MCF 10A (cell line): ENCODE measurements at regions of chr4 and their contacts with region 1.

Region 1: GRCh38 chr4:158193171-158193749 is 17.0 kb upstream of the TMEM144 start:
- DNase-seq: peak; percentile 60
- H3K4me3 Mint-ChIP-seq: no peak overlapping the region
- H3K27ac Mint-ChIP-seq: no peak overlapping the region
- H3K4me1 Mint-ChIP-seq: no peaks in the 10 kb centered on the region
- H3K27me3 Mint-ChIP-seq: no peaks in the 10 kb centered on the region
- CTCF ChIP-seq: peak; percentile 51

Region 2: DNA sequence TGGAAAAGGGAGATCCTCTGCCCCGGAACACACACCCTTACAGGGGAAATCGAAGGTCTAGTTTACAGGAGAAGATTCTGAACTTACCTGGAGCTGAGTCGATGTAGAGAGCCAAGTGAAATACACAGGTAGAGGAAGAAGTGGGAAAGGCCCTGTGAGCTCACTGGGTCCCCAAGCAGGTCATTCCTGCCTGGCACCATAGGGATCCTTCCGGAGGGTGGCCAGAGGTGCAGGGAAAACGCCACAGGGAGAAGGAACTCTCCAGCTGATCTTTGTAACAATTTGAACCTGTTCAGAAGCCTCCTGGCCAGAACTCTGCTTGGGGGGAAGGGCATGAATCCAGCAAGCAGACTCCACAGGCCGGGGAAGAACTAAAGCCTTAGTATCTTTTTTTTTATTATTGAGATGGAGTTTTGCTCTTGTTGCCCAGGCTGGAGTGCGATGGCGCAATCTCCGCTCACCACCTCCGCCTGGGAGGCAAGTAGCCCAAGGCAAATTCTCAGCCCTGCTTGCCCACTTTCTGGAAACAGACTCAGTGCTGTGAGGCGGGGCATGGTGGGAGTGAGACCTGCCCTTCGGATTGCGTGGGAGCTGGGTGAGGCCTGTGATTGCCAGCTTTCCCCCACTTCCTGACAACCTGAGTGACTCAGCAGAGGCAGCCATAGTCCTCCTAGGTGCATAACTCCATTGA is 369.4 kb before region 1 on chr4:
- CTCF ChIA-PET with region 1: no interaction called
- POLR2A ChIA-PET with region 1: no interaction called
- intact Hi-C with region 1: no loop called
- DNase-seq: peak; percentile 97
- H3K4me3 Mint-ChIP-seq: peak overlapping the region; percentile 35
- H3K27ac Mint-ChIP-seq: peak overlapping the region; percentile 89
- H3K4me1 Mint-ChIP-seq: peaks cover 22% of the 10 kb centered on the region
- H3K27me3 Mint-ChIP-seq: no peaks in the 10 kb centered on the region
- CTCF ChIP-seq: no peak

Region 3: GRCh38 chr4:158182736-158183135 is 10.5 kb before region 1 on chr4:
- CTCF ChIA-PET with region 1: interaction called, 28 read pairs
- POLR2A ChIA-PET with region 1: interaction called, 4 read pairs
- intact Hi-C with region 1: no loop called
- DNase-seq: no peak
- H3K4me3 Mint-ChIP-seq: no peak overlapping the region
- H3K27ac Mint-ChIP-seq: no peak overlapping the region
- H3K4me1 Mint-ChIP-seq: no peaks in the 10 kb centered on the region
- H3K27me3 Mint-ChIP-seq: no peaks in the 10 kb centered on the region
- CTCF ChIP-seq: no peak

Region 4: GRCh38 chr4:158238575-158238974 is 45.3 kb after region 1 on chr4:
- CTCF ChIA-PET with region 1: interaction called, 16 read pairs
- POLR2A ChIA-PET with region 1: no interaction called
- intact Hi-C with region 1: no loop called
- DNase-seq: no peak
- H3K4me3 Mint-ChIP-seq: no peak overlapping the region
- H3K27ac Mint-ChIP-seq: no peak overlapping the region
- H3K4me1 Mint-ChIP-seq: no peaks in the 10 kb centered on the region
- H3K27me3 Mint-ChIP-seq: no peaks in the 10 kb centered on the region
- CTCF ChIP-seq: no peak